Activated B cell treated with CpG ODN at 0.5 μM for 24 hours (primary cell): ENCODE measurements at regions of chrX and their contacts with region 1.

Region 1: GRCh38 chrX:139559383-139560042 is 29.0 kb downstream of the F9 start:
- DNase-seq: no peak
- ATAC-seq: no peak
- H3K4me3 Mint-ChIP-seq: no peak overlapping the region
- H3K27ac Mint-ChIP-seq: no peak overlapping the region
- H3K4me1 Mint-ChIP-seq: peaks cover 6% of the 10 kb centered on the region
- H3K27me3 Mint-ChIP-seq: no peaks in the 10 kb centered on the region
- CTCF ChIP-seq: no peak

Region 2: DNA sequence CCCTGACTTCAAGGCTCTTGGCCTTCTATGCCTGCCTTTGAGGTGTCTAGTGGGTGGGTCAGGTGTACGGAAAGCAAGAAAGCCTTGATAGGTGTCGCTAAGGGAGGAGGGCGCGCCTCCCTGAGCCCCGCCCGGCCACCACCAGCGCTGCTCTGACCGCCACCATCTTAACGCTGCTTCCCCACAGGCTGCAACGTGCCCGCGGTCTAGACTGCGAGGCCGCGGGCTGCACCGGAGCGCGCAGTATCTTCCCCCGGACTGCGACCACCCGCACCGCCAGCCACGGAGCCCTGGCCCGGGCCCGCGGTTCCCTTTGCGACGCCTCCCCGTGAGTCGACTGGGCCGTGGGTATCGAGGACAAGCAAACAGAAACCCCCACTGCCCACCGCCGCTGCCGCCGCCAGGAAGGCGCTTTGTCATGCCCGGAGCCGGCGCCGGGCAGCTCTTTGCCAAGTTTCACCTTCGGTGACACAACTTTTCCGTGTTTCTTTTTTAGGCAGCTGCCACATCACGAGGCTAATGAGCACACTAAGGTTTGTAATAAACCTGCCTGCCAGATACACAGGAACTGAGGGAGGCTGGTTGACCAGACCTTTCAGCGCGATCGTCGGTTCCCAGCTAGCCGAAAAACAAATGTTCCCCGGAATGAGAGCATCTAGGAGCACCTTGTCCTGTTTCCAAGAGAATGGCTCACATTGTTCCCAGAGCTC is 364.8 kb before region 1 on chrX:
- CTCF ChIA-PET with region 1: no interaction called
- POLR2A ChIA-PET with region 1: no interaction called
- intact Hi-C with region 1: loop called (anchors 10 kb)
- DNase-seq: no peak
- ATAC-seq: no peak
- H3K4me3 Mint-ChIP-seq: peak overlapping the region; percentile 53
- H3K27ac Mint-ChIP-seq: no peak overlapping the region
- H3K4me1 Mint-ChIP-seq: peaks cover 4% of the 10 kb centered on the region
- H3K27me3 Mint-ChIP-seq: peaks cover 16% of the 10 kb centered on the region
- CTCF ChIP-seq: no peak

Region 3: GRCh38 chrX:139538907-139539790 is 20.4 kb before region 1 on chrX:
- CTCF ChIA-PET with region 1: no interaction called
- POLR2A ChIA-PET with region 1: no interaction called
- intact Hi-C with region 1: no loop called
- DNase-seq: no peak
- ATAC-seq: no peak
- H3K4me3 Mint-ChIP-seq: no peak overlapping the region
- H3K27ac Mint-ChIP-seq: no peak overlapping the region
- H3K4me1 Mint-ChIP-seq: no peaks in the 10 kb centered on the region
- H3K27me3 Mint-ChIP-seq: no peaks in the 10 kb centered on the region
- CTCF ChIP-seq: no peak

Region 4: DNA sequence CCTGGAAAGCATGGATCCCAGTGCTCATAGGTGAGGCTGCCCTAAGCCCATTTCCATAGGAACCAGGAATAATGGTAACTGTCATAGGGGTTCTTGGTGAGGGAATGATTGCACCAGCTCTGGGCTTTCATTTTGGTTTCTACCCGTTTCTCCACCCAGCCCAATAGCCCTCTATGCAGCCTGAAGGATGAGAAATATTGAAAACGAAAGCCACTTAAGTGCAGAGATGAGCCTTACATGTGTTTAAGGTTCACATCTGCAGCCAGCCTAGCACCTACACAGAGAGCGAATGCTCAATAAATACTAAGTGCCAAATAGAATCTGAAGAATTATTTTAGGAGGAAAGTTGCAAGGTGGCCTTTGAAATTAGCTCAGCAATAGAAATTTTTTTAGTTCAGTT is 88.1 kb after region 1 on chrX:
- CTCF ChIA-PET with region 1: no interaction called
- POLR2A ChIA-PET with region 1: no interaction called
- intact Hi-C with region 1: no loop called
- DNase-seq: no peak
- ATAC-seq: no peak
- H3K4me3 Mint-ChIP-seq: no peak overlapping the region
- H3K27ac Mint-ChIP-seq: no peak overlapping the region
- H3K4me1 Mint-ChIP-seq: no peaks in the 10 kb centered on the region
- H3K27me3 Mint-ChIP-seq: no peaks in the 10 kb centered on the region
- CTCF ChIP-seq: no peak